CD4-positive, alpha-beta T cell (primary cell): ENCODE measurements at regions of chr22 and their contacts with region 1.

Region 1: DNA sequence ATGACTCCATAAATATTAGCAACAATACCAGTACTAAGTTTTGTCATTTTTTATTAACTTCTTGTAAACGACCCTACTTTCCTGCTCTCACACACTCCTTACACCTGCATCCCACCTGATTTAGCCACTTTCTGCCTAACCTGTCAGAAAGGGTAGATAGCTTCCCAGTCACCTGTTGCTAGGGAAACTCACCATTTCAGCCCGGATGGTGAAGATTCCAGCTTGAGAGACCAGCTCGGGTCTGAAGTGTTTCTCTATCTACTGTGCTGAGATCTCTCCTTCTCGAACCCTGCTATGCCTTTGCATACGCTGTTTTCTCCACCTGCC is at the start of gene PARVG:
- DNase-seq: peak in 12 of 14 experiments; percentile 19 to 84 (median 39)
- ATAC-seq: peak; percentile 58
- H3K4me3 ChIP-seq: peak within 1 kb of the TSS; percentile 88
- H3K4me3 Mint-ChIP-seq: peak within 1 kb of the TSS; percentile 85
- H3K27ac ChIP-seq: peak within 1 kb of the TSS; percentile 75 to 77
- H3K27ac Mint-ChIP-seq: peak within 1 kb of the TSS; percentile 88
- H3K4me1 ChIP-seq: peaks cover 31% of the 10 kb centered on the region
- H3K4me1 Mint-ChIP-seq: peaks cover 40% of the 10 kb centered on the region
- H3K27me3 ChIP-seq: no peaks in the 10 kb centered on the region
- H3K27me3 Mint-ChIP-seq: no peaks in the 10 kb centered on the region
- CTCF ChIP-seq: no peak
- total RNA-seq, gene PARVG: 142 to 146 TPM

Region 2: DNA sequence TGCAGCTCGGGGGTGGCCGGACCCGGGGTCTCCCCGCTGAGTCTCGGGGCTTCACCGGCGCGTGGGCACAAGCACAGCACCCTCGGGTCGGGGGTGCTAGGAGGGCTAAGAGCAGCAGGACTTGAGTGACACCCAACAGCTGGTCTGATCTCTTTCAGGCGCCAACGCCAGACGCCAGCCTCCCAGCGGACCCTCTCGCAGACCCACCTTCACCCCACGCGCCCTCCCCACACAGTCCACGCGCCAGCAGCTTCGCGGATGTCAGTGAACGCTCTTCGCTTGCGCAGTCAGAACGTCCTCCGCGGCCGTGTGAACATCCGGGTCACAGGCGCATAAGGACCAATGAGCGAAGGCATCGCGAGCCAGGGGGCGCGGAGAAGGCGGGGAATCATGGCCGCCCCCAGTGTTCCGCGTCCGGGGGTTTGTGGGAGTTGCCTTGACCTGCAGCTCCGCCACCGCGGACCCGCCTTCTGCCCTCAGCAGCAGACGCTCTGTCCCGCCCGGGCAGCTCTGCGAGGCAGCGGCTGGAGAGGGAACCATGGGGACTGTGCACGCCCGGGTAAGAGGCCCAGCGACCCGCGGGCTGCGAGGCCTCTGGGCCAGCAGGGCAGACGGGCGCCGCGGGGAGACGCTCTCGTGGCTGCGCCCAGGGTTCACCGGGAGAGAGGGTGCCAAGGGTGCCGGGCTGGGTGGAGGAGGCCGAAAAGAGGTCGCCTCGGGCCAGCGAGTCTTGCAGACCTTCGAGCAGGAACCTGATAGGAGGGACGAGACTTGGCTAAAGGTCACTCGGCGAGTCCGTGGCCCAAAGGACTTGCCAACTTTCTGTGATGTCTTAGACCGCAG is 225.4 kb before region 1 on chr22 and contains the start of gene SAMM50:
- CTCF ChIA-PET with region 1: no interaction called
- POLR2A ChIA-PET with region 1: interaction called, 6 read pairs
- intact Hi-C with region 1: loop called in 1 of 2 experiments (anchors 10 kb)
- DNase-seq: peak; percentile 82 to 95 (median 86)
- ATAC-seq: peak; percentile 96
- H3K4me3 ChIP-seq: peak within 1 kb of the TSS; percentile 95
- H3K4me3 Mint-ChIP-seq: peak within 1 kb of the TSS; percentile 98
- H3K27ac ChIP-seq: peak within 1 kb of the TSS; percentile 53 to 68
- H3K27ac Mint-ChIP-seq: peak within 1 kb of the TSS; percentile 89
- H3K4me1 ChIP-seq: peaks cover 31% of the 10 kb centered on the region
- H3K4me1 Mint-ChIP-seq: peaks cover 51% of the 10 kb centered on the region
- H3K27me3 ChIP-seq: no peaks in the 10 kb centered on the region
- H3K27me3 Mint-ChIP-seq: no peaks in the 10 kb centered on the region
- CTCF ChIP-seq: no peak
- total RNA-seq, gene SAMM50: 15.2 to 18.0 TPM

Region 3: GRCh38 chr22:44080936-44081861 is 99.5 kb before region 1 on chr22:
- CTCF ChIA-PET with region 1: no interaction called
- POLR2A ChIA-PET with region 1: interaction called, 3 read pairs
- intact Hi-C with region 1: loop called in 1 of 2 experiments (anchors 5 kb)
- DNase-seq: peak; percentile 52 to 82 (median 64)
- ATAC-seq: peak; percentile 55
- H3K4me3 ChIP-seq: no peak overlapping the region
- H3K4me3 Mint-ChIP-seq: no peak overlapping the region
- H3K27ac ChIP-seq: no peak overlapping the region
- H3K27ac Mint-ChIP-seq: no peak overlapping the region
- H3K4me1 ChIP-seq: peaks cover 5% of the 10 kb centered on the region
- H3K4me1 Mint-ChIP-seq: no peaks in the 10 kb centered on the region
- H3K27me3 ChIP-seq: no peaks in the 10 kb centered on the region
- H3K27me3 Mint-ChIP-seq: no peaks in the 10 kb centered on the region
- CTCF ChIP-seq: peak; percentile 88

Region 4: DNA sequence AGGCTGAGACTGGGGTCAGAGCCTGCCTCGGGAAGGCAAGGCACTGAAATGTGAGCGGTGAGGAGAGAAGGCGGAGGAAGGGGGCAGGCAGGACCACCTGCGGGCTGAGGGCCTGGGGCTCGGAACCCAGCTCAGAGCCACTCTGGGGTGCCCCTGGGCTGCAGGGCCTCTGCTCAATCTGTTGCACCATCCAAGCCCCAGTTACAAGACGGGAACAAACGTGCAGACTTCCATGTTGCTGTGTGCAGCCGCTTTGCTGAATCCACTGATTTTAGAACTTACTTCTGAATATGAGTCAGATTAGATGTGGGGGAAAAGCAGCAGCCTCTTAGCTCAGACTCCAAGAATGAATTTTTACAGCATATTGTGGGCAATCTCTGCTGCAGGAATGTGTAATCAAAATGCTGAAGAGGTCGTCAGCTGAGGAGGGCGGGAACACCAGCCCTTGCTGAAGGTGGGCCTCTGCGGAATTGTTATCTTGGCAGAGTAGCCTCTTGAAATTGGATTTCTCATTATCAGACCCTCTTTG is 21.7 kb after region 1 on chr22:
- CTCF ChIA-PET with region 1: no interaction called
- POLR2A ChIA-PET with region 1: no interaction called
- intact Hi-C with region 1: no loop called
- DNase-seq: no peak
- ATAC-seq: no peak
- H3K4me3 ChIP-seq: no peak overlapping the region
- H3K4me3 Mint-ChIP-seq: no peak overlapping the region
- H3K27ac ChIP-seq: no peak overlapping the region
- H3K27ac Mint-ChIP-seq: no peak overlapping the region
- H3K4me1 ChIP-seq: peaks cover 16% of the 10 kb centered on the region
- H3K4me1 Mint-ChIP-seq: peaks cover 19% of the 10 kb centered on the region
- H3K27me3 ChIP-seq: no peaks in the 10 kb centered on the region
- H3K27me3 Mint-ChIP-seq: no peaks in the 10 kb centered on the region
- CTCF ChIP-seq: no peak

Region 5: DNA sequence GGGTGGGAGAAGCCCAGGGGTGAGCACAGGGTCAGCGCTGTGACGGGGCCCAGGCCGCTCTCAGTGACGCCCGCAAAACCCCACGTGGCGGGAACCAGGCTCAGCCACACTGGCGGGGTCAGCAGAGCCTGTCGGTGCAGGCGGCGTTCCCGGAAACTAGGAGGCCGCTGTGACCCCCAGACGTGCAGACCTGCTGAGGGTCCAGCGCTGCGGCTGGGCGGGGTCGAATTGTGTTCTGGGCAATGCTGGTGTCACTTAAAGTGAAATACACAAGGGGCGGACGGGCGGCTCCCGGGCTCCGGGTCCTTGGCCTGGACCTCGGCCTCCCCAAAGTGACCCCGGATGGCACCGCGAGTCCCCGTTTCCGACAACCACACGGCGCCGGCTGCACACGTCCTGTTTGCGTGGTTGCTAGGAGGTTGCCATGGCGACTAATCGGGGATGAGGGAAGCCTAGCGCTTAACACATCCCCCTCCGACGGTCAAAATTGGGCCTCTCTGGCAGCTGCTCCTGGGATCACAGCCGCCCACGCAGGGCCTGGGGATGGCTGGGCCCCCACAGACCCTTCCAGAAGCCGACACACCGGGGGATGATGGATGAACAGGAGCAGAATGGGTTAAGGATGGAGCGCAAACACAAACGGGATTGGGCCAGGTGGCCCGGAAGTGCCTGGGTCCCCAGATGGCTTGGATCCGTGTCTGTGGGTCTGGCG is 439.6 kb after region 1 on chr22:
- CTCF ChIA-PET with region 1: no interaction called
- POLR2A ChIA-PET with region 1: no interaction called
- intact Hi-C with region 1: loop called (anchors 2 to 10 kb)
- DNase-seq: peak; percentile 73 to 96 (median 82)
- ATAC-seq: peak; percentile 83
- H3K4me3 ChIP-seq: peak overlapping the region; percentile 44
- H3K4me3 Mint-ChIP-seq: no peak overlapping the region
- H3K27ac ChIP-seq: no peak overlapping the region
- H3K27ac Mint-ChIP-seq: no peak overlapping the region
- H3K4me1 ChIP-seq: peaks cover 42% of the 10 kb centered on the region
- H3K4me1 Mint-ChIP-seq: no peaks in the 10 kb centered on the region
- H3K27me3 ChIP-seq: no peaks in the 10 kb centered on the region
- H3K27me3 Mint-ChIP-seq: no peaks in the 10 kb centered on the region
- CTCF ChIP-seq: no peak

Region 6: GRCh38 chr22:44664149-44664548 is 483.5 kb after region 1 on chr22:
- CTCF ChIA-PET with region 1: no interaction called
- POLR2A ChIA-PET with region 1: interaction called, 4 read pairs
- intact Hi-C with region 1: loop called in 1 of 2 experiments (anchors 10 kb)
- DNase-seq: peak in 13 of 14 experiments; percentile 19 to 85 (median 40)
- ATAC-seq: peak; percentile 12
- H3K4me3 ChIP-seq: no peak overlapping the region
- H3K4me3 Mint-ChIP-seq: peak overlapping the region; percentile 58
- H3K27ac ChIP-seq: peak overlapping the region in 1 of 2 donors; percentile 63
- H3K27ac Mint-ChIP-seq: peak overlapping the region; percentile 88
- H3K4me1 ChIP-seq: peaks cover 57% of the 10 kb centered on the region
- H3K4me1 Mint-ChIP-seq: peaks cover 46% of the 10 kb centered on the region
- H3K27me3 ChIP-seq: no peaks in the 10 kb centered on the region
- H3K27me3 Mint-ChIP-seq: no peaks in the 10 kb centered on the region
- CTCF ChIP-seq: no peak